ENCODE measurements at regions of chr19 and their contacts with region 1.

Region 1: DNA sequence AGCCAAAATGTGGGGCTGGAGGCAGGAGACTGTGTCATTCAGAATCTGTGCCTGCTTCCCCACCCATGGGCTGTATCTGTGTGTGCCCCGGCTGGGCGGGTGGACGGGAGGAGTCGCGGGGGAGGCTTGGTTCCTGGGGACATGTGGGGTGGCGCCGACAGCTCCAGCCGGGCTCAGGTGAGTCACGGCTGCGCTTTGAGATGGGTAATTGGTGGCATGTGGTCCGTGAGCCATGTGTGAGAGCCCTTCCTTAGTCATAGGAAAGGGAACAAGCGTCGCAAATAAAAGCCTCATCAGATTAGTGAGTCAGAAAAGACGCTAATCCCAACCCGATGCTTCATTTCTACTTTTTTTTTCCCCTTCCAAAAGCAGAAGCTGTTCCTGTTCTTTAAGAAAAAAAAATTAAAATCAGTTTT is 118.6 kb upstream of the ZNF536 start:
- DNase-seq: no peak
- H3K4me3 ChIP-seq: no peak overlapping the region
- H3K27ac ChIP-seq: no peak overlapping the region
- H3K4me1 ChIP-seq: no peaks in the 10 kb centered on the region
- H3K27me3 ChIP-seq: peaks cover 0 to 49% of the 10 kb centered on the region in 2 donors
- CTCF ChIP-seq: no peak
- POLR2A ChIP-seq: no peak

Region 2: DNA sequence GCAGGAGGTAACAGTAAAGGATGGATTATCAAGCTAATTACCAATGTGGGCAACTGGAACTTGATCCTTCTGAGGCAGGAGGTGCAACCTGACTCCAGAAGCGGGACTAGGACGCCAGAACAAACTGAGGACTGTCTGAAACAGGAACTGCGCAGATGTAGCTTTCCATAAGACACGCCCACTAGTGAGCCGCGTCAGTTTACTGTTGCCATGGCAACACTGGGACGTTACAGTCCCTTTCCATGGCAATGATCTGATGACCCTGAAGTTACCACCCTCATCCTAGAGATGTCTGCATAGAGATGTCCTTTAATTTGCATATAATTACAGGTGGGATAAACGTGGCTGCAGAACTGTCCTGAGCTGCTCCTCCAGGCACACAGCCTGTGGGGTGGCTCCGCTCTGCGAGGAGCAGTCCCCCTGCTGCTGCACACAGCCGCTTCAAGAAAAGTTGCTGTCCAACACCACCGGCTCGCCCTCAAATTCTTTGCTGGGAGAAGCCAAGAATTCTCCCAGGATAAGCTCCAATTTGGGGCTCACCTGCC is 1857.2 kb before region 1 on chr19:
- intact Hi-C with region 1: loop called (anchors 5 kb)
- DNase-seq: no peak
- H3K4me3 ChIP-seq: no peak overlapping the region
- H3K27ac ChIP-seq: no peak overlapping the region
- H3K4me1 ChIP-seq: no peaks in the 10 kb centered on the region
- H3K27me3 ChIP-seq: no peaks in the 10 kb centered on the region
- CTCF ChIP-seq: no peak
- POLR2A ChIP-seq: no peak

Region 3: GRCh38 chr19:29927944-29928625 is 325.5 kb before region 1 on chr19:
- intact Hi-C with region 1: loop called (anchors 5 kb)
- DNase-seq: no peak
- H3K4me3 ChIP-seq: no peak overlapping the region
- H3K27ac ChIP-seq: no peak overlapping the region
- H3K4me1 ChIP-seq: no peaks in the 10 kb centered on the region
- H3K27me3 ChIP-seq: peaks cover 0 to 7% of the 10 kb centered on the region in 2 donors
- CTCF ChIP-seq: no peak
- POLR2A ChIP-seq: no peak

Region 4: GRCh38 chr19:30204721-30205120 is 48.9 kb before region 1 on chr19:
- intact Hi-C with region 1: no loop called
- DNase-seq: no peak
- H3K4me3 ChIP-seq: no peak overlapping the region
- H3K27ac ChIP-seq: no peak overlapping the region
- H3K4me1 ChIP-seq: no peaks in the 10 kb centered on the region
- H3K27me3 ChIP-seq: peaks cover 0 to 24% of the 10 kb centered on the region in 2 donors
- CTCF ChIP-seq: no peak
- POLR2A ChIP-seq: no peak

Region 5: GRCh38 chr19:30325676-30326392 is 72.2 kb after region 1 on chr19:
- intact Hi-C with region 1: no loop called
- DNase-seq: no peak
- H3K4me3 ChIP-seq: no peak overlapping the region
- H3K27ac ChIP-seq: no peak overlapping the region
- H3K4me1 ChIP-seq: no peaks in the 10 kb centered on the region
- H3K27me3 ChIP-seq: peaks cover 0 to 10% of the 10 kb centered on the region in 2 donors
- CTCF ChIP-seq: no peak
- POLR2A ChIP-seq: no peak

Region 6: DNA sequence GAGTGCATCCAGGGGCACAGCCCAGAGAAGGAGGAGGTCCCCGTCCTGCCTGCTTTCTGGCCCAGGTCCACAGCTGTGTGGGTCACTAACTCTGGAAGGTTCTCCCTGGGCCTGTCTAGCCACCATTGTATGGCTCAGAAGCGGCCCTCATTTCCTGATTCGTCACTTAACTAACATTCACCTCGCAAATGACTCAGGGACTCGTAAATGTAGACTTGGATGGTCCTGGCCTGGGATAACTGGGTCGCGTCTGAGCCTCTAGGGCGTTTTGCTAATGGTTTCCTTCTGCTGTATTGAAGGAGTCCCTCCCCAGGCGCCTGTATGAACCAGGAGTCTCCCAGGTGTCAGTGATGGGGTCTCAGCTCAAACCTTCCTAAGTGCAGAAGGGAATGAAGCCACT is 281.4 kb after region 1 on chr19:
- intact Hi-C with region 1: no loop called
- DNase-seq: no peak
- H3K4me3 ChIP-seq: no peak overlapping the region
- H3K27ac ChIP-seq: no peak overlapping the region
- H3K4me1 ChIP-seq: no peaks in the 10 kb centered on the region
- H3K27me3 ChIP-seq: peaks cover 0 to 16% of the 10 kb centered on the region in 2 donors
- CTCF ChIP-seq: no peak
- POLR2A ChIP-seq: no peak

Region 7: GRCh38 chr19:30704771-30705330 is 451.3 kb after region 1 on chr19:
- intact Hi-C with region 1: loop called (anchors 5 kb)
- DNase-seq: no peak
- H3K4me3 ChIP-seq: no peak overlapping the region
- H3K27ac ChIP-seq: no peak overlapping the region
- H3K4me1 ChIP-seq: no peaks in the 10 kb centered on the region
- H3K27me3 ChIP-seq: no peaks in the 10 kb centered on the region
- CTCF ChIP-seq: no peak
- POLR2A ChIP-seq: no peak